Heart left ventricle (tissue), 16 donors: ENCODE measurements at regions of chr9 and their contacts with region 1.

Region 1: DNA sequence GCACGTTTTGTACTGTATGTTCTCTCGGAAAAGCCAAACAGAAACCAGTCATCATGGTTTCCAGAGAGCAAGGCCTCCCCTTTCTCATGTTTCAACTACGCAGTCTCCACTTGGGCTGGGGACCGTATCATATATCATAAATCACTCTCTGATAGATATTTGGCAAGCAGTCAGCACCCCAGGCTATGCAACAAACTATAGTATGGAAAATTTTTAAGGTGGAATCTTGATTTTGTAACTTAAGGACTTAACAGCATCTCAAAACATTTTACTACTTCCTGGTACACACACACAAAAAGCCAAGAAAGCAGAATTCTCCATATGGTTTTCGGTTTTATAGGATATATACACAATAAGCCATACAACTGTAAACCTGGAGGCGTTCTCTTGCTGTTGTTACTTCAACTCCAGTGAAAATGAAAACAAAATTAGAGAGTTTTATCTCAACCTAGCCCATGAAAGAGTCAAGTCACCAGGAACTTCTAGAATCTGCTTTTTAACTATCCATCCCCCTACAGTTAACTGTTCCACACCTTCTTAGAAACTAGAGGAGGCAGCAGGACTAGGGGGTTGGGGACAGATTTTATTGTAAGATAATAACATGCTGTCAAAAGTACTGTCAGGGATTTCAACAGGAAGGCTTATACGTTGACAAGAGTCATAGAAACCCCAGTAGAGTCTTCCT is 283.4 kb downstream of the NFIB start:
- DNase-seq: no peak
- ATAC-seq: peak in 3 of 4 donors; percentile 41 to 53 (median 47)
- H3K4me3 ChIP-seq: peak overlapping the region in 11 of 12 donors; percentile 23 to 52 (median 40)
- H3K27ac ChIP-seq: peak overlapping the region; percentile 82 to 92 (median 86)
- H3K4me1 ChIP-seq: peaks cover 0 to 64% (median 32%) of the 10 kb centered on the region in 12 donors
- H3K27me3 ChIP-seq: no peaks in the 10 kb centered on the region
- CTCF ChIP-seq: no peak
- POLR2A ChIP-seq: no peak

Region 2: DNA sequence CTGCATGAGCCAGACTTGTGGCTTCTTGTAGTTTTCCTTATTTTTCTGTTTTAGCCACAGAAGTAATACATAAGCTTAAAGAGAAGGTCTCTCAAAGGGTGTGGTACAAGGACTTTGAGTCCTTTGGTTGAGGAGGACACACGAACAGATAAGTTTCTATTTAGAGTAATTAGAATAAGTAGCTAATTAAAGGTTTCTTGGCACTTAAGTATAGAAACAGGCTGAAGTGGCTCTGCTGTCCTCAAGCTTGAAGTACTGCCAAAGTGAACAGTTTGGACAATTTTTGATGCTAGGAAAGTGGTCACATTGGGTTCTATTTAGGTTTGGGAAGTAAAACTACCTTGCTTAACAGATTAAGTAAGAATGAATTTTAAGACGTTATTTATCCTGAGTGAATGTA is 472.8 kb before region 1 on chr9:
- intact Hi-C with region 1: loop called in 1 of 10 experiments (anchors 10 kb)
- DNase-seq: no peak
- ATAC-seq: peak; percentile 80 to 91 (median 88)
- H3K4me3 ChIP-seq: no peak overlapping the region
- H3K27ac ChIP-seq: peak overlapping the region in 11 of 12 donors; percentile 4 to 69 (median 39)
- H3K4me1 ChIP-seq: peaks cover 0 to 27% (median 0%) of the 10 kb centered on the region in 12 donors
- H3K27me3 ChIP-seq: no peaks in the 10 kb centered on the region
- CTCF ChIP-seq: no peak
- POLR2A ChIP-seq: no peak

Region 3: DNA sequence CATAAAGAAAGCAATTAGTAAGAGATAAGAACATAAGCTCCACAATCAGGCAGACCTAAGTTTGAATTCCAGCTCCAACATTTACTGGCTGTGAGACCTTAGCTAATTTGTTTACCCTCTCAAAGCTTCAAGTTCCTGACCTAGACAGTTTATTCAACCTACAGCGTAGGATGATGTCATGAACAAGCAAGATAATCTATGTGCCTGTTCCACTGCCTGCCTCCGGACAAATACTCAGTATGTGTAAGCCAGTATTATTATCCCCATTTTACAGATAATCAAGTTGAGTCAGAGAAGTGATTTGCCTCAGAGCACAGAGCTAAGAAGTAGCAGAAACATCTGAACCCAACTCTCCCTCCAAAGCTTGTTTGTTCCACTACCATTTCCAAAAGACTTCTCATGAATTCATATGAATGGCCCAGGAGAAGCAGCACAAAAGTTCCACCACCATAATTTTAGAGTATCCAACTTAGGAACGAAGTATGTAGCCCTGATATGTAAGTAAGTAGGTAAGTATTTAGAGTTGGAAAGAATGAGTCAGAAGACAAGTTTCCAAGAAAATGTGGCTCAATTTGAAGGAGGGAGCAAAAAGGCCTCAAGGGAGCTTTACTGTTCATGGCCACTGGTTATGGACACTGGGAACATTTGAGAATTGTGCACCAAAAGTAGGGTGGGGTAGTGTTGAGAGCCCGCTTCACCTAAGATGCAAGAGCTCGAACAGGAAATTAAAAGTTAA is 114.8 kb before region 1 on chr9:
- intact Hi-C with region 1: loop called in 1 of 10 experiments (anchors 10 kb)
- DNase-seq: no peak
- ATAC-seq: peak; percentile 62 to 79 (median 74)
- H3K4me3 ChIP-seq: no peak overlapping the region
- H3K27ac ChIP-seq: peak overlapping the region; percentile 15 to 79 (median 50)
- H3K4me1 ChIP-seq: peaks cover 0 to 23% (median 3%) of the 10 kb centered on the region in 12 donors
- H3K27me3 ChIP-seq: no peaks in the 10 kb centered on the region
- CTCF ChIP-seq: no peak
- POLR2A ChIP-seq: no peak

Region 4: GRCh38 chr9:14096258-14096922 is 65.9 kb after region 1 on chr9:
- intact Hi-C with region 1: loop called in 5 of 10 experiments (anchors 5 kb)
- DNase-seq: peak in 4 of 5 donors; percentile 40 to 53 (median 42)
- ATAC-seq: peak; percentile 81 to 87 (median 84)
- H3K4me3 ChIP-seq: peak overlapping the region in 10 of 12 donors; percentile 9 to 48 (median 32)
- H3K27ac ChIP-seq: peak overlapping the region; percentile 39 to 90 (median 82)
- H3K4me1 ChIP-seq: peaks cover 0 to 71% (median 49%) of the 10 kb centered on the region in 12 donors
- H3K27me3 ChIP-seq: no peaks in the 10 kb centered on the region
- CTCF ChIP-seq: no peak
- POLR2A ChIP-seq: no peak

Region 5: GRCh38 chr9:14238552-14238951 is 208.0 kb after region 1 on chr9:
- intact Hi-C with region 1: no loop called
- DNase-seq: no peak
- ATAC-seq: peak; percentile 47 to 90 (median 72)
- H3K4me3 ChIP-seq: no peak overlapping the region
- H3K27ac ChIP-seq: peak overlapping the region in 11 of 12 donors; percentile 34 to 81 (median 72)
- H3K4me1 ChIP-seq: peaks cover 18 to 91% (median 67%) of the 10 kb centered on the region in 12 donors
- H3K27me3 ChIP-seq: no peaks in the 10 kb centered on the region
- CTCF ChIP-seq: no peak
- POLR2A ChIP-seq: no peak

Region 6: DNA sequence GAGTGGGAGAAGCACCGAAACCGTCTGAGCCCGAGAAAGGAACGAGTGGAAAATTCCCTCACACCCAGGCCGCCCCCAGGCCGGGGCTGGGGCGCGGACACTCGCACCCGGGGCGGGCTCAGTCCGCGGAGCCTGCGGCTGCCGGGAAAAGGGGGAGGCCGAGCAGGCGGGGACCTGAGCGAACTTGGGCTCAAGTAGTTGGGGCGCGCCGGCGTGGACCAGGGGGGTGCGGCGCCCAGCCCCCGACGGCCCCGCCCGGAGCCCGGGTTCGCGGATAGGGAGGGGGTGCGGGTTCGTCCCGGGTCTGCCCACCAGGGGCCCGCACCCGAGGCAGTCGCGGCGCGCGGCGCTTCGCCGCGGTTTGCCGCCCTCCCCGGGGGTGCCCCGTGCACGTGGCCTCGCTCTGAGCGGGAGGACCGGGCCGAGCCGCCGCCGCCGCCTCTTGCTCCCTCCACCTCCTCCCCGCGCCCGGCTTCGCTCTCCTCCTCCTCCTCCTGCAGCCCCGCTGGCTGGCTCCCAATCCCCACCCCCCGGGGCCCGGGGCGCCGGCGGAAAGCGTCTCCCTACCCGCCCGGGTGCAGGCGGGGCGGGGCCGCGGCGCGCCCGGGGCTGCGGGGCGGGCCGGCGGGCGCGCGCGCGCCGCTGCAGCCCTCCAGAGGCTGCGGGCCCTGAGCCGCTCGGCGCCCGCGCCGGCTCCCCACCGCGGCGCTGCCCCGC is 284.6 kb after region 1 on chr9:
- intact Hi-C with region 1: loop called in 6 of 10 experiments (anchors 2 to 10 kb)
- DNase-seq: peak; percentile 96 to 98 (median 97)
- ATAC-seq: peak; percentile 67 to 87 (median 80)
- H3K4me3 ChIP-seq: peak overlapping the region; percentile 66 to 90 (median 82)
- H3K27ac ChIP-seq: peak overlapping the region; percentile 93 to 100 (median 99)
- H3K4me1 ChIP-seq: peaks cover 5 to 53% (median 34%) of the 10 kb centered on the region in 12 donors
- H3K27me3 ChIP-seq: peaks cover 0 to 47% (median 0%) of the 10 kb centered on the region in 9 donors
- CTCF ChIP-seq: no peak
- POLR2A ChIP-seq: peak; percentile 40 to 82